ENCODE measurements at regions of chr5 and their contacts with region 1.

Region 1: DNA sequence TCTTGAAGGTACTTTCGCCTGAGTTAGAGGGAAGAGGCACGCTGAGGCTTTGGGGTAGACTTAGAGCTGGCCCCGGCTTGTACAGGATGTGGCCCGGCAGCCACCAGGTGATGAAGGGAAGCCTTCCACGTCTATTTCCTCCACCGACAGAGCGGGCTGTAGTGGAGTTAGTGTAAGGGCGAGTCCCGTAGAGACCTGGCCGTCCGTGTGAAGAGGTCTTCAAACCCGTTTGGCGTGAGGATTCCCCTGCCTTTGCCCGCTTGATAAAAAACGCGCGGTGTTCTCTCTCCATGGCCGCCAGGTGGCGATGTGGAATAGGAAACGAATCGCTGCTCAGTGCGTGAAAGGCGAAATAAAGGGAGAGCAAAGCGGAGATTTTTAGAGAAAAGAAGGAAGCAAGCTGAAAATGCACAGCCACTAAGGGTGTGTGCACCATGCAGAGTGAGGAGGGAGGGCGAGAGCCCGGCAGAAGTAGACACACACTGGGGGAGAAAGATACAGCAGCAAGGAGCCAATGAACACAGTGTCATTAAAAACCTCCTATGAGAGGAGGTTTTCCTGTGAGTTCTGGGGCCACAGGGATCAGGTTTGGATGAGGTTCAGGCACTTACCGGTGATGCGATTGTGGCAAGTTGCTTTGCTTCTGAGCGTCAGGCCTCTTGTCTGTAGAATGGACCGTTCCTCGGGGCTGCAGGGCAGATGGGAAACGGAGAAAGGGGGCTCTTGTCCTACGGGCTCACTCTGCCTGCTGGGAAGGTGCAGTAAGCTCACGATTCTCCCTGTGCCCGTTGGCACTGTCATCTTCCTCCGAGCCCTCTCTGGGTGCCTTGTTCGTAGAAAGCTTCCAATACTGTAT is 34.2 kb downstream of the STC2 start:
- DNase-seq: peak; percentile 81
- ATAC-seq: peak; percentile 82
- H3K4me3 ChIP-seq: no peak overlapping the region
- H3K27ac ChIP-seq: no peak overlapping the region
- H3K4me1 ChIP-seq: peaks cover 10% of the 10 kb centered on the region
- H3K27me3 ChIP-seq: peaks cover 19% of the 10 kb centered on the region
- CTCF ChIP-seq: peak; percentile 85

Region 2: GRCh38 chr5:173331956-173332479 is 38.0 kb after region 1 on chr5:
- intact Hi-C with region 1: loop called (anchors 5 kb)
- DNase-seq: peak; percentile 89
- ATAC-seq: peak; percentile 97
- H3K4me3 ChIP-seq: no peak overlapping the region
- H3K27ac ChIP-seq: no peak overlapping the region
- H3K4me1 ChIP-seq: peaks cover 25% of the 10 kb centered on the region
- H3K27me3 ChIP-seq: peaks cover 48% of the 10 kb centered on the region
- CTCF ChIP-seq: peak; percentile 88

Region 3: DNA sequence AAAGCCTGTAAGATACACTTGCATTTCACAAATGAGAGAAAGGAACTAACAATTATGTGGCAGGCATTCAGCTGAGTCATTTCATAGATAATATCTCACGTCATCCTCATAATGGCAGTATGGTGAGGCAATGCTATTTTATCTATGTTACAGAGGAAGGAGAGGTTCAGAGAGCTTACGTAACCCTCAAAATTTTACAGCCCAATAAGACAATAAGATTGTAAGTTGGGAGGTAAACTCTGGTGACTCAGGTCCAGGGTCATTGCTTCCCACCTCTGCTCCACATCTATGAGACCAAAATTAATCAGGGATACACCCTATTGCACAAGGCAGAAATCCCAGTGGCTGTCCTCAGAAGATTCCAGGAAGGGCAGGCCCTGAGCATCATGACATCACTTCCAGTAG is 1061.2 kb after region 1 on chr5:
- intact Hi-C with region 1: no loop called
- DNase-seq: no peak
- ATAC-seq: no peak
- H3K4me3 ChIP-seq: no peak overlapping the region
- H3K27ac ChIP-seq: no peak overlapping the region
- H3K4me1 ChIP-seq: no peaks in the 10 kb centered on the region
- H3K27me3 ChIP-seq: no peaks in the 10 kb centered on the region
- CTCF ChIP-seq: no peak